ENCODE measurements at regions of chr9 and their contacts with region 1.

Region 1: GRCh38 chr9:113564498-113565237 is 101.1 kb downstream of the RGS3 start:
- DNase-seq: peak; percentile 86

Region 2: DNA sequence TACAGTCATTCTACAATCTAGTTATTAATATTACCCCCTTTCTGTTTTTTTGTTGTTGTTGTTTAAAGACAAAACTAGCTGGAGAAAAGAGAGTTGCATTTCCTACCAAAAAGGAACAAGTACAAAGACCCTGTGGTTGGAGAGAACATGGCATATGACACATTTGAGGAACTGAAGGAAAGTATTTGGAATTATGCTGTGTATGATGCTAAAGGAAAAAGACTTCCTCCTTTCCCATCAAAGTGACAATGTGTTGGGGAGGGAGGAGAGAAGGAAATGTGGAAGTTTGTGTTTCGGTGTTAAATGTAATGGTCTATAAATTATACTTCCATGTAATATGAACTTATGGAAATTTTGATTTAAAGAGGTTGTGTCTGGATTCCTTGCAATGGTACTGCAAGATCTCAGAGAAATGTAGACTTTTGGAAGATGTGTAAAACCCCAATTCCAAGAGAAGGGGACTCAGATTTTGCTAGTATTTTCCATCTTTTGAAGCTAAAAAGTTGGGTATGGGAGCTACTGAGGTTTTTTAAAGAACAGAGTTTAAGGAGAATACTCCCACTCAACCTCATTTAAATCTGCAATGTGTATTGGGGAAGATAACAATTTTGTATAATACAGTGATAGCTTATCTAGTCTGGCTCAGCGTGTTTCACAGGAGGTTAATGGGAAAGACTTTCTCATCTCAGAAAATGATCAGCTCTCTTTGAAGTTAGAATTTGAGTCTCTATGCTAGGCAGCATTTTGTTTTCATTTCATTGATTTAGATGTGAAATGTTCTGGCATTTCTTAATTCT is 1381.1 kb after region 1 on chr9:
- intact Hi-C with region 1: loop called in 1 of 2 experiments (anchors 10 kb)
- DNase-seq: no peak